ENCODE measurements at regions of chr6 and their contacts with region 1.

Region 1: DNA sequence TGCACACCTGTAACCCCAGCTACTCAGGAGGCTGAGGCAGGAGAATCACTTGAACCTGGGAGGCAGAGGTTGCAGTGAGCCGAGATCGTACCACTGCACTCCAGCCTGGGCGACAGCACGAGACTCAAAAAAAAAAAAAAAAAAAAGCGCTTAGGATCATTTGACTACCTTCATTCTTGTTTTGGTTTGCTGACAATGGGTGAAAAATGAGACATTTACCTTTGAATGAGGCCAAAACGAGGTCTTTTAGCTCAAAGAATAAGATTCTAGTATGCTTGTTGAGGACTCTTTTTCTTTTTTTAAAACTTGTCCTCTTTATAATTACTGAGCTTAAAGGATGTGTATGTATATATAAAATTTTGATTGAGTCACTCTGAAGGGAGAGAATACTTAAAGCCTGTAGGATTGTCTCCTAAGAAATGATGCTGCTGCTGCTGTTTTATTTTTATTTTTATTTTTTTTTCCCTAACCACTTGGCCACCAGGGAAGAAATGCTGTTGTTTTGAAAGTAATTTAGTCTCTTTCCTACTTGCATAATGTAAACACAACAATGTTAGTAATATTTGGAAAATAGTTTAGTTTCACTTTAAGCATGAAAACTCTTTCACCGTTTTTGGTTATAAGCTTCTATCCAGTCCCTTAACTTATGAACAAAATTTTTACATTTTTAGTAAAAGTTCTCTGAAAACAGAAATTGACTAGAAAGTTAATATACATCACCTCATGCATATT is 7.9 kb downstream of the UBR2 start:
- DNase-seq: no peak
- ATAC-seq: no peak
- H3K4me3 ChIP-seq: no peak overlapping the region
- H3K27ac ChIP-seq: no peak overlapping the region
- H3K4me1 ChIP-seq: peaks cover 15% of the 10 kb centered on the region
- H3K27me3 ChIP-seq: no peaks in the 10 kb centered on the region
- CTCF ChIP-seq: no peak

Region 2: DNA sequence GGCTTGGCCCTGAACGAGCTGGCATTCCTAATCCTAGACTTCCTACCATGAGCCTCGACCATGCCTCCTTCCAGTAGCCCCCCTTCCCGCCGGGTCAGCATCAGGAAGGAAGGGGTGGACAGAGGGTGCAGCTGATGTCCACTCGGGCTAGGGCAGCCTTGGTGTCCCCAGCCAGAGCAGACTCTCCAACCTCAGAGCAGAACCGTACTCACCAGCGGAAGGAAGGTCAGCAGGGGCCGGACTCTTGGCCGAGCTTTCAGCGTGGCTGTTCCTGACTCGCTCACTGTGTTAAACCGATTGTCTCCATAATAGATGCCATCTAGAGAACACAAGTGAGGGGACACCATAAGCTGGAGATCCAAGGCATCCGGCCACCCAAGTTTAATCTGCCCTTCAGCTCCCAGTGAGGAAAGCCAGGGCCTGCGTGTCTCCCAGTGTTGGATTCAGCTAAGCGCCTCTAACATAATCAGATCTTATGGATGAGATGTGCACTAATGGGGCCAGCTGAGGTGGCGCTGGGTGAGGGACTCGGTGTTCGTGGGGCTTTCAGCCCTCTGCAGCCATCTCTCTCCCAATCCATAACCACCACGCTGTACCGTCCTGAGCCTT is 443.2 kb before region 1 on chr6:
- CTCF ChIA-PET with region 1: no interaction called
- POLR2A ChIA-PET with region 1: interaction called, 20 read pairs
- intact Hi-C with region 1: no loop called
- DNase-seq: no peak
- ATAC-seq: no peak
- H3K4me3 ChIP-seq: no peak overlapping the region
- H3K27ac ChIP-seq: no peak overlapping the region
- H3K4me1 ChIP-seq: peaks cover 15% of the 10 kb centered on the region
- H3K27me3 ChIP-seq: no peaks in the 10 kb centered on the region
- CTCF ChIP-seq: no peak

Region 3: DNA sequence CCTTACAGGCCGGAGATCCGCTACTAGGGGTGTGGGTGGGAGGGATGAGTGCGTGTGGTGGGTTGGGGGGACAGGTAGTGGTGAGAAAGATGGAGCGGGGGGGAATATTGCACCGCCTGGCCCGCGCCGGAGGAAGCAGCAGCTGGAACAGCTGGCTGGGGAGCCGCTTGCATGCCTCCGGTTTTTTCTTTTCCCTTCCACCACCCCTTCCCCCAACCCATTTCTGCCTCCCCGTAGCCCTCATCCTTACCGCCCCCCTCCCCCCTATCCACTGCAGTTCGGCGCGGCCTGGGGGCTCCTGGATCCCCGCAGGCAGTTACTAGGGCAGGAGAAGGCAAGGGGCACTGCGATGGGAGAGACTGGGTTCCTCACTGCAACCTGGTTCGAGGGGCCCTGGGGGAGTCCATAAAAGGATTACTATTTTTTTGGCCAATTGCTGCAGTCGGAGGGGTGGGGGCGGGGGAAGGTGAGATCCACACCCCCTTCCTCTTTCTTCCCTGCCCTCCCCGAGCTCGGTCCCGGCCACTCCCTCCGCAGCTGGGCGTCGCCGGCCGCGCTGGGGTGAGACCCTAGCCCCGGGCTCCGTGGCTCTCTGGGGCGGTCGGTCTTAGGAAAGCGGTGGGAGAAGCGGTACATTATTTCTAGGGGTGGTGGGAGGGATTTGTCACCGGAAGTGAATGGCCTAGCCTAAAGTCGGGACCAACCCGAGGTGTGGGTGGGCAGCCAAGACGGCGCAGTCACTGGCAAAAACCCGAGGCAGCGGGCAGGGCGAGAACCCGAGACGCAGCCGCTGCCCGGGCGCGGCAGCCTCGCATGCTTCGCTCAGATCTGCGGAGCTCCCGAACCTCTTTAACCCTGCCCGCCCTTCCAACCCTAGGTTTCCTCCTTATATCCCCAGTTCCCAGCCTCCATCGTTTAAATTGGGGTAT is 174.9 kb after region 1 on chr6:
- CTCF ChIA-PET with region 1: no interaction called
- POLR2A ChIA-PET with region 1: no interaction called
- intact Hi-C with region 1: no loop called
- DNase-seq: peak; percentile 89
- ATAC-seq: peak; percentile 77
- H3K4me3 ChIP-seq: peak overlapping the region; percentile 84
- H3K27ac ChIP-seq: peak overlapping the region; percentile 80
- H3K4me1 ChIP-seq: peaks cover 21% of the 10 kb centered on the region
- H3K27me3 ChIP-seq: no peaks in the 10 kb centered on the region
- CTCF ChIP-seq: no peak

Measured in PC-3 (cell line).